ENCODE measurements at regions of chr20 and their contacts with region 1.

Region 1: DNA sequence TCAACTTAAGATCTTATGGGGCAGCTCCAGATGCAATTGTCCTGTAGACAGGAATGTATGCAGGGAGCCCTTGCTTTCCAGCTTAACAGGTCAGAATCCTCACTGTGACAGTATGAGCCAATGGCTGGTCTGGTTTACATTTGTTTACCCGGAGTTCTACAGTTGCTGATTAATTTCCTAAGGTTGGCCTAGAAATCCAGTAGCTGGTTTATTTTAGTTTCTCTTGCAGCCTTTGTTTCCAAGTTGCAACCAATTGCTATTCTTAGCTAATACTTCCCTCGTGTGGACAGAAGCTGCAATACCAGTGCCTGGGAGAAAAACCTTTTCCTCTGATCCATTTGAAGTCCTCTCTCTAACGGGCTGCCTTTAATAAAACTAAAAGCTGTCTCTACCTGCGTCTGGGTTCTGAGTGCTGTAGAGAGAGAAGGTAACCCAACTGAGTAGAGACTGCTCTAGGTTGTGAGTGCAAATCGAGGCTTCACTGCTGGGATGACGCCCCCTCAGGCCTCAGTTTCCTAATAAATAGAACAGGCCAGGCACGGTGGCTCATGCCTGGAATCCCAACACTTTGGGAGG is 45.9 kb downstream of the ZNF217 start:
- DNase-seq: peak in 1 of 2 donors; percentile 11
- ATAC-seq: peak; percentile 77

Region 2: GRCh38 chr20:52312132-52312729 is 1235.5 kb before region 1 on chr20:
- intact Hi-C with region 1: loop called in 1 of 2 experiments (anchors 5 kb)
- DNase-seq: peak in 1 of 2 donors; percentile 38
- ATAC-seq: peak; percentile 63

Region 3: GRCh38 chr20:53040693-53041589 is 506.8 kb before region 1 on chr20:
- intact Hi-C with region 1: no loop called
- DNase-seq: no peak
- ATAC-seq: no peak

Region 4: DNA sequence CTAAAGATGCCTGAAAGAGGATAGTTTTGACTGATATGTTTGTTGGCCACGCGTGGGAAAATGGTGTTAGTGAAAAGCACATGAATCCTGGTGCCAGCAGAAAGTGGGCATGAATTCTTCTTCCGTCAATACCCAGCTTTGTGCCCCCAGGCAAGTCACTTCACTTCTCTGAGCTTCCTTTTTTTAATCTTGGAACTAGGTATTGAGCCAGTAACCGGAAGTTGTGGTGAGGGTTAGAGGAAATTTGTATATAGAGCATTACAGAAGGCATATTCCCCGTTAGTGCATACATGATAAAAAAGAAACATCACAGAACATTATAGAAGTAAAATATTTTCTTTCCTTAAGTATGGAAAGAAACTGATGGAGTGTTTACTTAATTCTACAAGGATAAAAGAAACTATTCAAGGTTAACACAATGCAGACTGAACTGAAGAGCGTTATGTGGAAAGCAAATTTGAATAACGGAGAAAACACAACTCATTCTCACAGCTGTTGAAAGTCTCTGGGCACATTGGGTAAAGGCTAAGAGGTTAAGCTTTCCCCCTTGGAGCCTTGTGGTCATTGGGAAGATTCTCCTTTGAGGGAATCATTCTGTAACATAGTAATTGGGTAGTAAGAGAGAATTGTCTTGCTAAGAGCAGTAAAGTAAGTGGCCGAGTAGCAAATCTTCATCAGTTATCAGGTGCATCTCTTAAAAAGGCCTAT is 299.5 kb after region 1 on chr20:
- intact Hi-C with region 1: no loop called
- DNase-seq: no peak
- ATAC-seq: no peak

Measured in left colon (tissue), 2 donors.